ENCODE measurements at regions of chr20 and their contacts with region 1.

Region 1: GRCh38 chr20:7137395-7138151 is 370.1 kb downstream of the BMP2 start:
- DNase-seq: peak; percentile 23
- H3K4me3 ChIP-seq: no peak overlapping the region
- H3K27ac ChIP-seq: no peak overlapping the region
- H3K4me1 ChIP-seq: no peaks in the 10 kb centered on the region
- H3K27me3 ChIP-seq: no peaks in the 10 kb centered on the region
- CTCF ChIP-seq: no peak

Region 2: GRCh38 chr20:7080472-7080871 is 57.1 kb before region 1 on chr20:
- CTCF ChIA-PET with region 1: interaction called, 10 read pairs
- dilution Hi-C with region 1: no loop called
- in situ Hi-C with region 1: no loop called
- intact Hi-C with region 1: no loop called
- DNase-seq: no peak
- H3K4me3 ChIP-seq: no peak overlapping the region
- H3K27ac ChIP-seq: no peak overlapping the region
- H3K4me1 ChIP-seq: no peaks in the 10 kb centered on the region
- H3K27me3 ChIP-seq: no peaks in the 10 kb centered on the region
- CTCF ChIP-seq: no peak